ENCODE measurements at regions of chr9 and their contacts with region 1.

Region 1: DNA sequence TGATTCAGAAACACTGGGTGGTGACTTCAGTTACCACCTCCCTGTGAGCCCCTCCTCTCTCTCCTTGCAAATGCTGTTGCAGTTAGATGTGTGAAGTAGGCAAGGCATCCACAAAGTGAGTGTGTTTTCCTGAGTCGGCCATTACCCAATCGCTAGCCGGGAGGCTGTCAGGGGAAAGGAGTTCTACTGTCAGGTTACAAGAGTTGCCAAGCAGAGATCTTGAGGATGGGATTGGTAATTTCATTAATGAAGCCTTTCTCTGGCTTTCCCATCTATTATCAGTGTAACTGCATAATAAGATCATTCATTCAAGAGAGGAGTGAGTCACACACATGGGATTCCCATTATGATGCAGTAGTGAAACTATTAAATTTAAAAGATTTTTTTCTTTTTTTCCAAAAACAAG is 106.9 kb downstream of the GLDC start:
- DNase-seq: no peak
- CTCF ChIP-seq: no peak

Region 2: GRCh38 chr9:4828761-4829160 is 1709.9 kb before region 1 on chr9:
- CTCF ChIA-PET with region 1: no interaction called
- POLR2A ChIA-PET with region 1: interaction called, 14 read pairs
- DNase-seq: no peak
- CTCF ChIP-seq: no peak

Region 3: DNA sequence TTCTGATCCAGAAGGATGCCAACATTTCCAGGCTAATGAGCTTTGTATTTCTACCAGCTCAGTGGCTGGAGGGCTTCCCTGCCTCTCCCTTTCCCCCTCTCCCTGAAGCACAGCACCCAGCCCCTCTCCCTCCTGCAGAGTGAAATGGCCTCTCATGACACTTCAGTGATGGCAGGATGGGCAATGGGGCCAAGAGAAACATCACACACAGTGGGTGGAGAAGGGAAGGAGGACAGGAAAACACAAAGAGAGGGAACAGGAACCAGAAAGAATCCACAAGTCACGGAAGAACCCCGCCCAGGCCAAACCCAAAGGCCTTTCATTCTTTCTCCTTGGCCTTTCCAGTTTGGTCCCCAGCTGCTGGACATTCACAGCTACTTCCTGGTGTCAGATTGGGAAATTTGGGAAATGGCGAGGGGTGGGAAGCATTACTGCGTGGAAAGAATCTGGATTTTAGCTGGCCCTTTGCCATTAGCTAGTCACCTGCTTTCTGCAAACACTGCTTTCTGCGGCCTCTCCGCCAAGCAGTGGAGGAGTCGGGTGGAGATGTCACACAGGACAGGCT is 24.3 kb after region 1 on chr9:
- CTCF ChIA-PET with region 1: no interaction called
- POLR2A ChIA-PET with region 1: no interaction called
- DNase-seq: no peak
- CTCF ChIP-seq: no peak